ENCODE measurements at regions of chr6 and their contacts with region 1.

Region 1: GRCh38 chr6:14066782-14067406 is 50.7 kb upstream of the CD83 start:
- DNase-seq: peak; percentile 45
- H3K4me3 ChIP-seq: no peak overlapping the region
- CTCF ChIP-seq: peak; percentile 41

Region 2: DNA sequence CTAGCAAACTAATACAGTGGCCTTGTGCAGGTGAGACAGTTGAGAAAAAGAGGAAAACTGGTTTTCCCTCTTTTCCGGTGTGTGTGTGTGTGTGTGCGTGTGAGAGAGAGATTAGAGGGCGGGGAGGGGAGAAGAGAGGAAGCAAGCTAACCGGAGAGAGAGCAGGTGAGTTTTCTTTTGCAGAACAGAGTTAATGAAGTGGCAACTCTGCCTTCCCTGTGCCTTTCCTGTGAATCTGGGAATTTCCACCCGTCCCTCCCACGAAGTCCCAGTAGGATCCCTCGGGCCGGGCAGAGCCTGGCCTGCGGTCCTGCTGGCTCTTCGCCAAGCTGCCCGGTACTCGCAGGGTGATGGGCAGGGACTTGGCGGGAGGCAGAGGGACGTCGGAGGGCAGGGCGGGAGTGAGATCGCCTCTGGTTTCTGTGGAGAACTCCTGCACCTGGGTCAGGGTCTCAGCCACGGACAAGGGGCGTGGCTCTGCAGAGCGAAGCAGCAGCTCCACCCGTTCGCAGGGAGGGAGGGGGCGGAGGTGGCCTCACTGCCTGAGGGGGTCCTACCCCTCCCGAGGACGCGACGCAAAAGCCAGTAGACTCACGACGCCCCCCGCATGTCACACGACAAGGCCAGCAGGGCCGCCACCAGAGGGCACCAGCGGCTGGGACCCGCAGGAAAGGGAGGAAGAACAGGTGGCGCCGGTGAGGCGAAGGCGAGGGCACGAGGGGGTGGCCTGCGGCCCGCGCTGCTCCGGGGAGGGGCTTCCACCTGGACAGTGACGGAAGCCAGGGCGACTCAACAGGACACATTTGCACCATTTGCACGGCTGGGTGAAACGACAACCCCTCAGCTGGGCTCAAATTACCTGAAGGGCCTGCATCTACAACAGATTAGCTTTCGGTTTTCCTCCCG is 193.4 kb before region 1 on chr6:
- CTCF ChIA-PET with region 1: interaction called, 37 read pairs
- POLR2A ChIA-PET with region 1: no interaction called
- DNase-seq: no peak
- H3K4me3 ChIP-seq: peak overlapping the region; percentile 50
- CTCF ChIP-seq: peak; percentile 77

Region 3: GRCh38 chr6:13924146-13924948 is 142.5 kb before region 1 on chr6:
- CTCF ChIA-PET with region 1: interaction called, 530 read pairs
- POLR2A ChIA-PET with region 1: interaction called, 3 read pairs
- DNase-seq: no peak
- H3K4me3 ChIP-seq: peak overlapping the region; percentile 66
- CTCF ChIP-seq: no peak

Region 4: GRCh38 chr6:14046476-14047068 is 20.3 kb before region 1 on chr6:
- CTCF ChIA-PET with region 1: interaction called, 183 read pairs
- POLR2A ChIA-PET with region 1: no interaction called
- DNase-seq: no peak
- H3K4me3 ChIP-seq: no peak overlapping the region
- CTCF ChIP-seq: peak; percentile 82

Measured in AG04449 (cell line).